OCI-LY7 (cell line): ENCODE measurements at regions of chr4 and their contacts with region 1.

Region 1: GRCh38 chr4:2977211-2978088 is 14.1 kb downstream of the GRK4 start:
- DNase-seq: no peak
- H3K4me3 ChIP-seq: no peak overlapping the region
- H3K27ac ChIP-seq: no peak overlapping the region
- H3K4me1 ChIP-seq: no peaks in the 10 kb centered on the region
- CTCF ChIP-seq: no peak

Region 2: DNA sequence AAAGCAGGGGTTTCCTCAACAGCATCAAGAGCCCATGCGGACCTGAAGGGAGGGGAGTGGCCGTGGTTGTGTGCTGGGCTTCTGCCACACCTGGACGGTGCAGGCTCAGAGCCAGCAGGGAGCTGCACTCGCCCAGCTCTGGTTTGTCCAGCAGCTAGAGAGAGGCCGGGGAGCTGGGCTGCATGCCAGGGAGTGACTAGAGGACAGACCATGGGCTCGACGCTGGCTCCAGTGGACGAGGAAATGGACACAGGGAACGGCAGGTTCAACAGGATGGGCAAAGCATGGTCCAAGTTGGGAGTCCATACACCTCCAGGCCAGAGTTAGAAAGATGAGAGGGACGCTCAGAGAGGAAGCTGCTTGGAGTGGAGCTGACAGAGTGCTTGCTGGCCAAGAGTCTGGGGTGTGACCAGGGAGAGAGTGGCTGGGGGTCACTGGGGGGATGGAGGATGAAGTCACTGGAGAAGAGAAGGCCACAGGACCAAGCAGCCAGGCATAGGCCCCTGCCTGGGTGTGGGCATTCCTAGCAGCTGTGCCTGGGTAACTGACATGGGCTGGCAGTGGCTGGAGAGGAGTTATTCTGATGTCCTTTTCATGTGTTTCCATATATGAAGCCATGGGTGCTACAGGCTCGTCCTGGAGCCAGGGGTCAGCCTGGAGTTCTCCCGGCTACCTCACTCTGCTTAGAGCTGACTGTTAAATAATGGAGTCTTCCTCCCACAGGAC is 54.1 kb after region 1 on chr4:
- CTCF ChIA-PET with region 1: no interaction called
- POLR2A ChIA-PET with region 1: interaction called, 3 read pairs
- intact Hi-C with region 1: loop called (anchors 5 kb)
- DNase-seq: no peak
- H3K4me3 ChIP-seq: no peak overlapping the region
- H3K27ac ChIP-seq: no peak overlapping the region
- H3K4me1 ChIP-seq: no peaks in the 10 kb centered on the region
- CTCF ChIP-seq: no peak

Region 3: GRCh38 chr4:3098346-3098745 is 120.9 kb after region 1 on chr4:
- CTCF ChIA-PET with region 1: no interaction called
- POLR2A ChIA-PET with region 1: no interaction called
- intact Hi-C with region 1: no loop called
- DNase-seq: no peak
- H3K4me3 ChIP-seq: no peak overlapping the region
- H3K27ac ChIP-seq: no peak overlapping the region
- H3K4me1 ChIP-seq: no peaks in the 10 kb centered on the region
- CTCF ChIP-seq: no peak